RWPE1 (cell line): ENCODE measurements at regions of chr3 and their contacts with region 1.

Region 1: DNA sequence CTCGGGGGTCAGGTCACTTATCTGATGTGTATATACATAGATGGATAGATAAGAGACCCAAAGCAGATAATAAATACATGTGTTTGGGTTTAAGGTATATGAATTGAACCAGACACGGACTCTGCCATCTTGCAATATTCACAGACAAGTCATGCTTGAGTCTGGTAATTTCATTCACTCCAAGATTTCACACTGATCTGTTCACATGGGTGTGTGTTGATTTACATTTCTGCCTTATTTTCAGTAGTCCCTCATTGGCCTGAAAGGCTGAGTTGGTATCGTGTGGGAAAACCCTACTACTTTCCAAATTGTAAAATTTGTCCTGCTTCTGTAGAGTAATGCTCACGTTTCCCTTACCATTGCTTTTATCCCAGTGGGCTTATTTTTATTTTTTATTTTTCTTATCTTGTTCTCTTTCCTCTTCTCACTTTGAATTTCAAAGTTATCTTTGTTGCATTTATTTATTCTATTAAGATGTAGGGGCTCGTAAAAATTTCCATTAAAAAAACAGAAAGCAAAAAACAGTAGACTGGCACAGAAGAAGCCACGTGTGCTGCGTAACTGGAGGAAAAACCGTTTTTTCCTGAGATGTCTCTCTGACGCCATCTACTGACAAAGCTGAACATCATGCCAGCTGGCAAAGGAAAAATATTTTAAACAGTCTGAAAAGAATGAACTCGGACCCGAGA is 10.8 kb upstream of the MFSD1 start:
- DNase-seq: peak; percentile 50
- H3K27ac ChIP-seq: no peak overlapping the region
- CTCF ChIP-seq: peak; percentile 93

Region 2: GRCh38 chr3:158722108-158722507 is 68.9 kb before region 1 on chr3:
- CTCF ChIA-PET with region 1: interaction called, 25 read pairs
- POLR2A ChIA-PET with region 1: interaction called, 11 read pairs
- DNase-seq: no peak
- H3K27ac ChIP-seq: no peak overlapping the region
- CTCF ChIP-seq: no peak

Region 3: GRCh38 chr3:158727206-158728060 is 63.6 kb before region 1 on chr3:
- CTCF ChIA-PET with region 1: interaction called, 25 read pairs
- POLR2A ChIA-PET with region 1: interaction called, 4 read pairs
- DNase-seq: peak; percentile 57
- H3K27ac ChIP-seq: no peak overlapping the region
- CTCF ChIP-seq: peak; percentile 87